CD8-positive, alpha-beta memory T cell (primary cell): ENCODE measurements at regions of chr19 and their contacts with region 1.

Region 1: GRCh38 chr19:3304871-3305423 is 61.4 kb upstream of the NFIC start:
- DNase-seq: peak; percentile 61 to 76 (median 70)
- H3K4me3 ChIP-seq: no peak overlapping the region
- H3K4me3 Mint-ChIP-seq: no peak overlapping the region
- H3K27ac ChIP-seq: no peak overlapping the region
- H3K27ac Mint-ChIP-seq: no peak overlapping the region
- H3K4me1 ChIP-seq: peaks cover 8% of the 10 kb centered on the region
- H3K4me1 Mint-ChIP-seq: peaks cover 0 to 3% (median 0%) of the 10 kb centered on the region in 3 donors
- H3K27me3 ChIP-seq: no peaks in the 10 kb centered on the region
- H3K27me3 Mint-ChIP-seq: peaks cover 16 to 41% of the 10 kb centered on the region in 2 donors

Region 2: DNA sequence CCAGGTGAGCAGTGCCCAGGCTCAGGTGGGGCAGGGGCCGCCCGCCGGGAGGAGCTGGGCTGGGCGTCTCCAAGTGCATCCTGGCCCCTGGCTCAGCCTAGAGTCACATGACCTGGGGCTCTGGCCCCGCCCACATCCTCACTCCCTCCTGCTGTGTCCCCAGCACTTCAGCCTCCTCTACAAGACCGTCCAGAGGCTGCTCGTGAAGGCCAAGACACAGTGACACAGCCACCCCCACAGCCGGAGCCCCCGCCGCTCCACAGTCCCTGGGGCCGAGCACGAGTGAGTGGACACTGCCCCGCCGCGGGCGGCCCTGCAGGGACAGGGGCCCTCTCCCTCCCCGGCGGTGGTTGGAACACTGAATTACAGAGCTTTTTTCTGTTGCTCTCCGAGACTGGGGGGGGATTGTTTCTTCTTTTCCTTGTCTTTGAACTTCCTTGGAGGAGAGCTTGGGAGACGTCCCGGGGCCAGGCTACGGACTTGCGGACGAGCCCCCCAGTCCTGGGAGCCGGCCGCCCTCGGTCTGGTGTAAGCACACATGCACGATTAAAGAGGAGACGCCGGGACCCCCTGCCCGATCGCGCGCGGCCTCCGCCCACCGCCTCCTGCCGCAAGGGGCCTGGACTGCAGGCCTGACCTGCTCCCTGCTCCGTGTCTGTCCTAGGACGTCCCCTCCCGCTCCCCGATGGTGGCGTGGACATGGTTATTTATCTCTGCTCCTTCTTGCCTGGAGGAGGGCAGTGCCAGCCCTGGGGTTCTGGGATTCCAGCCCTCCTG is 97.3 kb before region 1 on chr19:
- CTCF ChIA-PET with region 1: no interaction called
- POLR2A ChIA-PET with region 1: no interaction called
- DNase-seq: peak in 1 of 5 donors; percentile 43
- H3K4me3 ChIP-seq: no peak overlapping the region
- H3K4me3 Mint-ChIP-seq: no peak overlapping the region
- H3K27ac ChIP-seq: no peak overlapping the region
- H3K27ac Mint-ChIP-seq: peak overlapping the region in 1 of 8 donors; percentile 24
- H3K4me1 ChIP-seq: no peaks in the 10 kb centered on the region
- H3K4me1 Mint-ChIP-seq: peaks cover 0 to 2% (median 0%) of the 10 kb centered on the region in 3 donors
- H3K27me3 ChIP-seq: no peaks in the 10 kb centered on the region
- H3K27me3 Mint-ChIP-seq: peaks cover 0 to 3% of the 10 kb centered on the region in 2 donors

Region 3: GRCh38 chr19:3266792-3267514 is 38.0 kb before region 1 on chr19:
- CTCF ChIA-PET with region 1: no interaction called
- POLR2A ChIA-PET with region 1: no interaction called
- DNase-seq: no peak
- H3K4me3 ChIP-seq: no peak overlapping the region
- H3K4me3 Mint-ChIP-seq: no peak overlapping the region
- H3K27ac ChIP-seq: no peak overlapping the region
- H3K27ac Mint-ChIP-seq: no peak overlapping the region
- H3K4me1 ChIP-seq: no peaks in the 10 kb centered on the region
- H3K4me1 Mint-ChIP-seq: no peaks in the 10 kb centered on the region
- H3K27me3 ChIP-seq: peaks cover 17% of the 10 kb centered on the region
- H3K27me3 Mint-ChIP-seq: peaks cover 33 to 41% of the 10 kb centered on the region in 2 donors

Region 4: DNA sequence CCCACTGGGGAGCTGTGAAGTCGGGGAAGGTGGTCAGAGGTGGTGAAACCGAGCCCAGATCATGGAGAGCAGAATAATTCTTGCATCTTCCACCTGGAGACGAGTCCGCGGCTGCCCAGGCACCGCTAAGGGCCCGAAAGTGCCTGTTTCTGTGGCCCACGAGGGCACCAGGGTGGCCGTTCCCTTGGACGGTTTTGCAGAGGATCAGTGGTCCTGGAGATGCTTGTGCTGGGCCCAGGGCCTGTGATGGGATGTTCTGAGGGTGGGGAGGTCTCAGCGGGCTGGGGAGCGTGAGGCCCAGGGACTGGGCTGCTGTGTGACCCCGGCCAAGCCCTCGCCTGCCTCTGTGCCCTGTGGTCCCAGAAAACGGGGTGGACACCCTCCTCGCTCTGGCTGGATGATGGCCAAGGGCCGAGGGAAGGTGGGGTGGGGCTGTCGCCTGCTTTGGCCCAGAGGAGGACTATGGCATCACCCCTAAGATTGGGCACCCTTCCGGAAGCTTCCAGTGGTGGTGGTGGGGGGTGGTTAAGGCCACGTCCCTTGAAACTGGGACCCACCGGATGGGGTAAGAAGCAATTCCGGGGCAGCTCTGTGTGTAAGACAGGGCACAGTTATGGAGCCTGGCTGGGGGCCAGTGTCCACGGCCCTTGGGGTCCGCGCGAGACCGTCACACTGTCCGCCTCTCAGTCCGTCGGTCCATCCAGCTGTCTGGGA is 10.2 kb after region 1 on chr19:
- CTCF ChIA-PET with region 1: interaction called, 13 read pairs
- POLR2A ChIA-PET with region 1: no interaction called
- DNase-seq: no peak
- H3K4me3 ChIP-seq: no peak overlapping the region
- H3K4me3 Mint-ChIP-seq: no peak overlapping the region
- H3K27ac ChIP-seq: no peak overlapping the region
- H3K27ac Mint-ChIP-seq: no peak overlapping the region
- H3K4me1 ChIP-seq: no peaks in the 10 kb centered on the region
- H3K4me1 Mint-ChIP-seq: no peaks in the 10 kb centered on the region
- H3K27me3 ChIP-seq: peaks cover 10% of the 10 kb centered on the region
- H3K27me3 Mint-ChIP-seq: peaks cover 20 to 32% of the 10 kb centered on the region in 2 donors